ENCODE measurements at regions of chr16 and their contacts with region 1.

Region 1: GRCh38 chr16:81723098-81723723 is 55.9 kb upstream of the PLCG2 start:
- DNase-seq: peak; percentile 84
- H3K4me3 ChIP-seq: no peak overlapping the region
- H3K27ac ChIP-seq: no peak overlapping the region
- H3K4me1 ChIP-seq: no peaks in the 10 kb centered on the region
- H3K27me3 ChIP-seq: peaks cover 4% of the 10 kb centered on the region; the same call in 1 of the 2 replicates

Region 2: GRCh38 chr16:81403616-81404373 is 319.4 kb before region 1 on chr16:
- in situ Hi-C with region 1: loop called (anchors 10 kb)
- DNase-seq: peak; percentile 85
- H3K4me3 ChIP-seq: peak overlapping the region; percentile 56; the same call in 1 of the 2 replicates
- H3K27ac ChIP-seq: no peak overlapping the region
- H3K4me1 ChIP-seq: 0 out of 2 replicates have a peak, but pooled peaks cover 9% of the 10 kb centered on the region
- H3K27me3 ChIP-seq: no peaks in the 10 kb centered on the region

Region 3: GRCh38 chr16:81551151-81551808 is 171.9 kb before region 1 on chr16:
- in situ Hi-C with region 1: no loop called
- DNase-seq: peak; percentile 92
- H3K4me3 ChIP-seq: 0 out of 2 replicates have a peak overlapping the region, but pooled peaks have one; percentile 2
- H3K27ac ChIP-seq: peak overlapping the region; percentile 95
- H3K4me1 ChIP-seq: peaks cover 39% of the 10 kb centered on the region
- H3K27me3 ChIP-seq: no peaks in the 10 kb centered on the region